ENCODE measurements at regions of chr4 and their contacts with region 1.

Region 1: DNA sequence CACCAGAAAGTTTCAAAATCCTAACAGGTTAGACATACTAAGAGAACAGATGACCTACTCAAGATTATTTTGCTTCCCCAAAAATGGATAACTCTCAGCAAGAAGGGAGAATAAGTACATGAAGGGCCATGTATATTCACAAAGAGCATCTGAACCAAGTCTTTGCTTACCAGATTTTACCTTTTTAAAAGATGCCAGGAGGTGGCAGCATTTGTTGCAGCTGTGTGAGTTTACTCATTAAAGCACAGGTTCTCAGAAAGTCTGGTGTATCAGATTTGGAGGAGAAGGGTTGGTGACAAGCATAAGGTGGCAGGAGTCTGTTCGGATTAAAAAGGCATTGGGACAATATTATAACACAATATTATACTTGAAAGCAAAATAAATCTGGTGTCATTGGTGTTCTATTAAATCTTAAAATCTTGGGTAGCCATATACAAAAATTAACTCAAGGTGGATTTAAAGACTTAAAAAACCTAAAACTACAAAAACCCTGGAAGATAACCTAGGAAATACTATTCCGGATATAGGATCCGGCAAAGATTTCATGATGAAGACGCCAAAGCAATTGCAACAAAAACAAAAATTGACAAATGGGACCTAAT is 51.3 kb upstream of the NFKB1 start:
- DNase-seq: peak in 3 of 5 donors; percentile 46 to 88 (median 78)
- H3K4me3 ChIP-seq: no peak overlapping the region
- H3K27ac ChIP-seq: no peak overlapping the region
- H3K4me1 ChIP-seq: no peaks in the 10 kb centered on the region
- H3K27me3 ChIP-seq: no peaks in the 10 kb centered on the region
- CTCF ChIP-seq: peak; percentile 63

Region 2: DNA sequence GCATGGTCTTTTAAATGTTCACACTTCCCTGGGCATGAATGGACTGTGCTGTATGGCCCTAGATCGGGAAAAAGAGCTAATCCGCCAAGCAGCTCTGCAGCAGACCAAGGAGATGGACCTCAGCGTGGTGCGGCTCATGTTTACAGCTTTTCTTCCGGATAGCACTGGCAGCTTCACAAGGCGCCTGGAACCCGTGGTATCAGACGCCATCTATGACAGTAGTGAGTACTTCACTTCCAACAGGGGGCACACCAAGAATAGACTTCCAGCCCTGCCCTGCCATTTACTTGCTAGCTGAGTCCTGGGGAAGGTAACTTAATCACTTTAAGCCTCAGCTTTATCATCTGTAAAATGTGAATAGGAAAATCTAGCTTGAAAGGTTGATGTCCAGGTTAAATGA is 129.0 kb after region 1 on chr4:
- intact Hi-C with region 1: no loop called
- DNase-seq: peak in 2 of 5 donors; percentile 11 to 23
- H3K4me3 ChIP-seq: no peak overlapping the region
- H3K27ac ChIP-seq: no peak overlapping the region
- H3K4me1 ChIP-seq: no peaks in the 10 kb centered on the region
- H3K27me3 ChIP-seq: no peaks in the 10 kb centered on the region
- CTCF ChIP-seq: no peak

Region 3: DNA sequence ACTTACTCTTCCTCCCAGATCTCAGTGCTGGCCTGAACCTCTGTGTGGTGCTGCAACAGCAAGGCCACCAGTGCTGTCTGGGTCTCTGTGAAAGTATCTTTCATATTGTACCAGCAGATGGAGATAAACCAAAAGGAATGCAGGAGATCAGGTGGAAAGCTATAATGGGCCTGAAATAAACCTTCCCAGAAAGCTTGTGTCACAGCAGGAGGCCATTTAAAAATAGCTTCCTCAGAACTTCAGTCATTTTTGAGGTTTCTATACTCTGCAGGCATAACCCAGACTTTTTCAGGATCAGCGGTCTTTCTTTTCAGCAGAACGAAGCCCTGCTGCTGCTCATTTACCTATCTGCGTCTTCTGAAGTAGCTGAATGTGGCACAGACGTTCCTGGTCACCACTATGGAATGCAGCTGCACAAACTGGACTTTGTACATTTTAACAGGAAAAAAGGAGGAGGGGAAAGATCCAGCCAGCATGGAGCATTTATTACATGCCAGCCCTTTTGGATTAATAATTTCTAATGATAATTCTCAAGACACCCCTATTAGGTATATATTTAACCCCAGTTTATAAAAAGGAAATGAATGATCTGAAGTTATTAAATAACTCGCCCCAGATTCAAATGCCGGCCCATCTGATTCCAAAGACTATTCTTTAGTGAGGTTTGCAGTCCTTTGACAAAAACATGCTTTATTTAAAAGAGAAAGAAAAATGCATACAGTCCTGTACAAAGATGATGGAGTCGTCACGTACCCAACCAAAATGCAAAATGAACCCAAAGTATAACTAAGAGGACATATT is 171.0 kb after region 1 on chr4:
- intact Hi-C with region 1: loop called (anchors 10 kb)
- DNase-seq: peak in 4 of 5 donors; percentile 54 to 82 (median 67)
- H3K4me3 ChIP-seq: peak overlapping the region in 2 of 3 donors; percentile 31 to 36
- H3K27ac ChIP-seq: peak overlapping the region; percentile 68 to 83
- H3K4me1 ChIP-seq: peaks cover 0 to 8% (median 4%) of the 10 kb centered on the region in 3 donors
- H3K27me3 ChIP-seq: no peaks in the 10 kb centered on the region
- CTCF ChIP-seq: peak; percentile 51

Region 4: DNA sequence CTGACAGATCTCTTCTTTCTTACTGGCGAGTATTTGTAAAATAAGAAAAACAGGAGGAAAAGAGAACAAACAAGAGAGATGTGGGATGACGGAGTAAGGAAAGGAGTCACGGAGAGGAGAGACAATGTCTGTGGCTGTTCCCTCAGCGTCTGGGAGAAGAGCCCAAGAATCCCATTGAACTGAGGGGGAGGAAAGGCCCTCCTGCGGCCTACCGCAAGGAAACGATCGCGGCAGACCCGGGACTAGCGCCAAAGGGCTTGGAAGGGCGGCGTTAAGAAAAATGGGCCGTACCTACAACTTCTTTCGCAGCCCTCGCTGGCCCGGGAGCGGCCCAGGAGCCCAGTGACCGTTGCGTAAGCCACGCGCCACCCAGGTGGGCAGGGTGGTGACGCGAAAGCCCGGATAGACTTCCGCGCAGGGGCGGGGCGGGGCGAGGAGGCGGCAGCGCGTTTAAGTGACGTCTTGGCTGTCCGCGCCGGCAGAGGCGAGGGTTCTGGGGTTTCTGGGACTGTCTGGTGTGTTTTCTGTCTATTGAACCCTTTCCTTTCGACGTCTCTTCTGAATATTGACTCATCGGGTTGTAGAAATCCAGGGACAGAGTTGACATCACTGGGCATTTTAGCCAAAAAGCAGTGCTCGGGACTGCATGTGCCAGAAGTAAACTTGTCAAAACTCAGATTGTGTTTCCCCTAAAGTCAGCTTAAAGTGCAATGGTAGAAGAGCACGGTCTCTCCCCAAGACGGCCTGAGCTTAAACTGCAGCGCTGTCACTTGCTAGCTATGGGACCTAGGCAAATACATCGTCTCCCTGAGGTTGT is 569.7 kb after region 1 on chr4 and contains the start of gene SLC9B1:
- intact Hi-C with region 1: loop called (anchors 10 kb)
- DNase-seq: peak; percentile 95 to 98 (median 96)
- H3K4me3 ChIP-seq: peak within 1 kb of the TSS; percentile 79 to 97 (median 81)
- H3K27ac ChIP-seq: peak within 1 kb of the TSS; percentile 91 to 94
- H3K4me1 ChIP-seq: peaks cover 0 to 7% (median 6%) of the 10 kb centered on the region in 3 donors
- H3K27me3 ChIP-seq: no peaks in the 10 kb centered on the region
- CTCF ChIP-seq: no peak
- total RNA-seq, gene SLC9B1: 1.8 TPM

Measured in kidney (tissue), 22 donors.